ENCODE measurements at regions of chr1 and their contacts with region 1.

Region 1: DNA sequence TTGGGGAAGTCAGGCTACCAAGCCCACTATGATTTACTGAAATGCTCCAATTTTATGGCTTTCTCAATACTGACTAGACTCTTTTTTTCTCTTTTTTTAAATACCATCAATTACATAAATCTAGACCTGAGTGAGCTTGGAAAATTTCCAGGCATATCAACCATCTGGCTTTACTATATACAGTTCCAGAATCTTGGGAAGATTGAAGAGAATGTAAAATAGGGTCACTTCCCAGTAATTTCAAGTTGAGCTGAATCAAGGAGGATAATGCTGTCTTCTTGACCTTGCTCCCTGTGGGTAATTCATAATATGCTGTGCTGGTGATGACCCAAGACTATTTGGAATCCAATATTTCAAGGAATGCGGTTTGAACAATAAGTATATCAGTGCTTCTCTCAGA is 108.1 kb downstream of the MAP3K21 start:
- DNase-seq: no peak
- ATAC-seq: no peak
- H3K4me3 ChIP-seq: no peak overlapping the region
- H3K4me3 Mint-ChIP-seq: no peak overlapping the region
- H3K27ac ChIP-seq: no peak overlapping the region
- H3K27ac Mint-ChIP-seq: no peak overlapping the region
- H3K4me1 ChIP-seq: no peaks in the 10 kb centered on the region
- H3K4me1 Mint-ChIP-seq: no peaks in the 10 kb centered on the region
- H3K27me3 ChIP-seq: peaks cover 0 to 12% of the 10 kb centered on the region in 2 experiments
- H3K27me3 Mint-ChIP-seq: peaks cover 39% of the 10 kb centered on the region
- CTCF ChIP-seq: no peak

Region 2: GRCh38 chr1:233406994-233407631 is 28.5 kb before region 1 on chr1:
- CTCF ChIA-PET with region 1: no interaction called
- POLR2A ChIA-PET with region 1: no interaction called
- intact Hi-C with region 1: loop called in 1 of 2 experiments (anchors 1 kb)
- DNase-seq: no peak
- ATAC-seq: no peak
- H3K4me3 ChIP-seq: no peak overlapping the region
- H3K4me3 Mint-ChIP-seq: no peak overlapping the region
- H3K27ac ChIP-seq: no peak overlapping the region
- H3K27ac Mint-ChIP-seq: no peak overlapping the region
- H3K4me1 ChIP-seq: no peaks in the 10 kb centered on the region
- H3K4me1 Mint-ChIP-seq: no peaks in the 10 kb centered on the region
- H3K27me3 ChIP-seq: peaks cover 0 to 19% of the 10 kb centered on the region in 2 experiments
- H3K27me3 Mint-ChIP-seq: peaks cover 26% of the 10 kb centered on the region
- CTCF ChIP-seq: no peak

Region 3: GRCh38 chr1:233448109-233448689 is 12.6 kb after region 1 on chr1:
- CTCF ChIA-PET with region 1: no interaction called
- POLR2A ChIA-PET with region 1: no interaction called
- intact Hi-C with region 1: no loop called
- DNase-seq: no peak
- ATAC-seq: no peak
- H3K4me3 ChIP-seq: no peak overlapping the region
- H3K4me3 Mint-ChIP-seq: no peak overlapping the region
- H3K27ac ChIP-seq: no peak overlapping the region
- H3K27ac Mint-ChIP-seq: no peak overlapping the region
- H3K4me1 ChIP-seq: no peaks in the 10 kb centered on the region
- H3K4me1 Mint-ChIP-seq: no peaks in the 10 kb centered on the region
- H3K27me3 ChIP-seq: peaks cover 0 to 2% of the 10 kb centered on the region in 2 experiments
- H3K27me3 Mint-ChIP-seq: peaks cover 10% of the 10 kb centered on the region
- CTCF ChIP-seq: no peak